ENCODE measurements at regions of chr11 and their contacts with region 1.

Region 1: GRCh38 chr11:100004541-100004940 is 682.5 kb upstream of the ARHGAP42 start:
- DNase-seq: no peak
- ATAC-seq: no peak
- H3K4me3 ChIP-seq: no peak overlapping the region
- H3K27ac ChIP-seq: no peak overlapping the region
- H3K4me1 ChIP-seq: no peaks in the 10 kb centered on the region
- H3K27me3 ChIP-seq: no peaks in the 10 kb centered on the region
- CTCF ChIP-seq: no peak
- POLR2A ChIP-seq: no peak
- RAD21 ChIP-seq: no peak

Region 2: DNA sequence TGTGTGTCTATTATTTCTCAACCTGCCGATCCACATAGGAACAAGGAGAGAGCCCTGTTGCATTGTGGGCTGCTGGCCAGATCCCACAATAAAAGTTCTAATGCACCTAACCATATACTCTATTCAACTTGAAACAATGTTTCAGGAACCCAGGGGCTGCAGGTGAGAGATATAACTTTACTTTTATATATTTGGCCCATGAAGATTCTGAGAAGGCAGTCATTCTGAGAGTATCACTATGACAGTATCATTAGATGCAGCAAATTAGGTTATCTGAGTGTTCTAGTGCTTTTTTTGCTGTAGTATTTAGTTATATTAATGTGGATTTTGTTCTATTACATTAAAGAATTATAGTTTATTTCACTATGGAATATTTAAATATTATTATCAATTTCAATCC is 27.4 kb after region 1 on chr11:
- CTCF ChIA-PET with region 1: no interaction called
- POLR2A ChIA-PET with region 1: no interaction called
- RAD21 ChIA-PET with region 1: no interaction called
- intact Hi-C with region 1: loop called (anchors 5 kb)
- DNase-seq: no peak
- ATAC-seq: no peak
- H3K4me3 ChIP-seq: no peak overlapping the region
- H3K27ac ChIP-seq: no peak overlapping the region
- H3K4me1 ChIP-seq: no peaks in the 10 kb centered on the region
- H3K27me3 ChIP-seq: no peaks in the 10 kb centered on the region
- CTCF ChIP-seq: no peak
- POLR2A ChIP-seq: no peak
- RAD21 ChIP-seq: no peak

Measured in HCT116 (cell line).